ENCODE measurements at regions of chrX and their contacts with region 1.

Region 1: GRCh38 chrX:136227948-136228838 is 23.0 kb downstream of the MAP7D3 start:
- DNase-seq: no peak
- ATAC-seq: peak; percentile 62
- H3K4me3 Mint-ChIP-seq: peak overlapping the region; percentile 68
- H3K27ac Mint-ChIP-seq: peak overlapping the region; percentile 87
- H3K4me1 Mint-ChIP-seq: peaks cover 33% of the 10 kb centered on the region
- H3K27me3 Mint-ChIP-seq: no peaks in the 10 kb centered on the region
- CTCF ChIP-seq: no peak

Region 2: DNA sequence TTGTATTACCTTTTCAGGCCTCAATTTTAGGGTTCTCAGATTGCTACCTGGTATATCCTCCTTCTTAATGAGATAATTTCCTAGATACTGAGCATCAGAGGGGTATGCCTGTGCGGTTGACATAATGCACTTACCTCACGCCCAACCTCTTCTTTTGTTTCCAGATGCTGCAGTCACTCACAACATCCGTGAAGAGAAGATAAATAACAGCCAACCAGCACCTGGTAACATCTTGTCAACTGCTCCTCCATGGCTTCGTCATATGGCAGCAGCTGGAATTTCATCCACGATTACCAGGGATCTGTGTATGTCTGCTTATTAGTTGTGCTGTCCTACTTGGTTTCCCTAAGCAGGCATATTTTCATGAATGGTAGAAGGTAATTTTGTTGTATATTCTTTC is 317.9 kb before region 1 on chrX:
- CTCF ChIA-PET with region 1: no interaction called
- POLR2A ChIA-PET with region 1: no interaction called
- intact Hi-C with region 1: no loop called
- DNase-seq: no peak
- ATAC-seq: no peak
- H3K4me3 Mint-ChIP-seq: no peak overlapping the region
- H3K27ac Mint-ChIP-seq: no peak overlapping the region
- H3K4me1 Mint-ChIP-seq: no peaks in the 10 kb centered on the region
- H3K27me3 Mint-ChIP-seq: no peaks in the 10 kb centered on the region
- CTCF ChIP-seq: no peak

Region 3: GRCh38 chrX:136147315-136147901 is 80.8 kb before region 1 on chrX and contains the start of gene FHL1:
- CTCF ChIA-PET with region 1: no interaction called
- POLR2A ChIA-PET with region 1: no interaction called
- intact Hi-C with region 1: loop called (anchors 5 kb)
- DNase-seq: peak; percentile 30
- ATAC-seq: peak; percentile 80
- H3K4me3 Mint-ChIP-seq: peak within 1 kb of the TSS; percentile 83
- H3K27ac Mint-ChIP-seq: peak within 1 kb of the TSS; percentile 30
- H3K4me1 Mint-ChIP-seq: peaks cover 21% of the 10 kb centered on the region
- H3K27me3 Mint-ChIP-seq: peaks cover 4% of the 10 kb centered on the region
- CTCF ChIP-seq: no peak
- total RNA-seq, gene FHL1: 2.6 and 6.4 TPM in 2 replicates

Region 4: GRCh38 chrX:136192839-136193414 is 35.3 kb before region 1 on chrX:
- CTCF ChIA-PET with region 1: no interaction called
- POLR2A ChIA-PET with region 1: interaction called, 11 read pairs
- intact Hi-C with region 1: no loop called
- DNase-seq: no peak
- ATAC-seq: no peak
- H3K4me3 Mint-ChIP-seq: no peak overlapping the region
- H3K27ac Mint-ChIP-seq: no peak overlapping the region
- H3K4me1 Mint-ChIP-seq: peaks cover 32% of the 10 kb centered on the region
- H3K27me3 Mint-ChIP-seq: no peaks in the 10 kb centered on the region
- CTCF ChIP-seq: no peak